Ovary (tissue), 10 donors: ENCODE measurements at regions of chr14 and their contacts with region 1.

Region 1: DNA sequence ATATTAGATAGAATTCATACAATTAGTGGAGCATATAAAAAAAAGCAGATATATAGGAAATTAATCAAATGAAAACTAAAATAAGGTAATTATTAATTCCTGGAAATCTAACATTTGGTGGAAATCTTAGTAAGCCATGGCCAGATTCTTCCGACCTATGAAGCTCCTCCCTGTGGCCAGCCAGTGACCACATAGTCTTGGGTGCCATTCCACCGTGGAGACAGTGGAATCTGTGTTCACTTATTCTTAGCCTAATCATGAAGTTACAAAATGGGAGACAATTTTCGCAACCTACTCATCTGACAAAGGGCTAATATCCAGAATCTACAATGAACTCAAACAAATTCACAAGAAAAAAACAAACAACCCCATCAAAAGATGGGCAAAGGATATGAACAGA is 241.9 kb upstream of the FLRT2 start:
- DNase-seq: no peak
- H3K4me3 ChIP-seq: no peak overlapping the region
- H3K27ac ChIP-seq: no peak overlapping the region
- H3K4me1 ChIP-seq: no peaks in the 10 kb centered on the region
- H3K27me3 ChIP-seq: no peaks in the 10 kb centered on the region
- CTCF ChIP-seq: no peak
- EP300 ChIP-seq: no peak
- POLR2A ChIP-seq: no peak

Region 2: GRCh38 chr14:84750763-84751554 is 537.1 kb before region 1 on chr14:
- intact Hi-C with region 1: loop called in 1 of 4 experiments (anchors 5 kb)
- DNase-seq: no peak
- H3K4me3 ChIP-seq: no peak overlapping the region
- H3K27ac ChIP-seq: no peak overlapping the region
- H3K4me1 ChIP-seq: no peaks in the 10 kb centered on the region
- H3K27me3 ChIP-seq: no peaks in the 10 kb centered on the region
- CTCF ChIP-seq: no peak
- EP300 ChIP-seq: no peak
- POLR2A ChIP-seq: no peak

Region 3: DNA sequence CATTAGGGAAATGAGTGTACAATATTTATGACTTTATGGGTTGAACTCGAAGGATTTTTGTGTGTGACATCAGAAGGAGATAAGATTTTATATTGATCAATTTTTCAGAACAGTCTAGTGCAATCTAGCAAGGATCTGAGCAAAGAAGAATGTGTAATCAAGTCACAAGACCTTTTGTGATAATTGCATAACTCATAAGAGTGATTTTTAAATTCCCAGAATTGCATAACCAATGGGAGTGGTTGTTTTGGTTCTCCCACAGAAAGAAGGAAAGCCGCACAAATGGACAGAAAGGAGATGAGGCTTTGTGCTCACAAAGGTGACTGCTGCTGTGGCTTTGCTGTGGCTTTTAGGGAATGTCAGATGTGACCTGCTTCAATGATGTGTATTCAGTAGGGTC is 199.8 kb before region 1 on chr14:
- intact Hi-C with region 1: no loop called
- DNase-seq: no peak
- H3K4me3 ChIP-seq: no peak overlapping the region
- H3K27ac ChIP-seq: no peak overlapping the region
- H3K4me1 ChIP-seq: no peaks in the 10 kb centered on the region
- H3K27me3 ChIP-seq: no peaks in the 10 kb centered on the region
- CTCF ChIP-seq: no peak
- EP300 ChIP-seq: no peak
- POLR2A ChIP-seq: no peak

Region 4: DNA sequence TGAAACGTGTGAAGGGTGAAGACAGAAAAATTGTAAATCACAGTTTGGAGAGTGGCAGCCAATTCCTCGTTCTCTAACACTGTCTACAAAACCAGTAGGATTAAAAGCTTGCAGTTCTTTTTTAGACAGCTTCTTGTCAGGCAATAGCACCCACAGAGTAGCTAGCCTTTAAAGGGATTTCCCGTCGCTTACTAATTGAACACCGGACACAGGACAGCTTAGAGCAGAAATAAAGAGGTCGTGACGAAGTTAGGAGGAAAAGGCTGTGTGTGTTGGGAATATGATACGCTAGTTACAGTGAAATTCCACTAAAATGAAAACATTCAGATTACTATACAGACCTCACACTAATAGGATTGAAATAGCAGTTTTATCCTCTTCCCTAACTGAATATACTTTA is 92.8 kb after region 1 on chr14:
- intact Hi-C with region 1: no loop called
- DNase-seq: no peak
- H3K4me3 ChIP-seq: no peak overlapping the region
- H3K27ac ChIP-seq: no peak overlapping the region
- H3K4me1 ChIP-seq: no peaks in the 10 kb centered on the region
- H3K27me3 ChIP-seq: no peaks in the 10 kb centered on the region
- CTCF ChIP-seq: no peak
- EP300 ChIP-seq: no peak
- POLR2A ChIP-seq: no peak